Body of pancreas (tissue), 4 donors: ENCODE measurements at regions of chr12 and their contacts with region 1.

Region 1: GRCh38 chr12:13208533-13209435 is 12.3 kb downstream of the EMP1 start:
- DNase-seq: no peak
- ATAC-seq: no peak
- H3K4me3 ChIP-seq: no peak overlapping the region
- H3K27ac ChIP-seq: no peak overlapping the region
- H3K4me1 ChIP-seq: peaks cover 5% of the 10 kb centered on the region
- H3K27me3 ChIP-seq: no peaks in the 10 kb centered on the region
- CTCF ChIP-seq: peak in 4 of 7 experiments; percentile 18 to 39 (median 32)
- POLR2A ChIP-seq: no peak

Region 2: GRCh38 chr12:13023811-13024530 is 184.8 kb before region 1 on chr12:
- intact Hi-C with region 1: loop called (anchors 10 kb)
- DNase-seq: peak in 3 of 4 donors; percentile 33 to 60 (median 40)
- ATAC-seq: peak; percentile 72
- H3K4me3 ChIP-seq: no peak overlapping the region
- H3K27ac ChIP-seq: no peak overlapping the region
- H3K4me1 ChIP-seq: no peaks in the 10 kb centered on the region
- H3K27me3 ChIP-seq: no peaks in the 10 kb centered on the region
- CTCF ChIP-seq: peak in 5 of 7 experiments; percentile 30 to 55 (median 36)
- POLR2A ChIP-seq: no peak

Region 3: GRCh38 chr12:13094347-13094746 is 114.4 kb before region 1 on chr12:
- intact Hi-C with region 1: loop called (anchors 10 kb)
- DNase-seq: peak in 1 of 4 donors; percentile 29
- ATAC-seq: no peak
- H3K4me3 ChIP-seq: no peak overlapping the region
- H3K27ac ChIP-seq: peak overlapping the region in 1 of 4 donors; percentile 35
- H3K4me1 ChIP-seq: peaks cover 37% of the 10 kb centered on the region
- H3K27me3 ChIP-seq: no peaks in the 10 kb centered on the region
- CTCF ChIP-seq: no peak
- POLR2A ChIP-seq: no peak

Region 4: GRCh38 chr12:13376627-13377373 is 168.0 kb after region 1 on chr12:
- intact Hi-C with region 1: no loop called
- DNase-seq: no peak
- ATAC-seq: no peak
- H3K4me3 ChIP-seq: no peak overlapping the region
- H3K27ac ChIP-seq: no peak overlapping the region
- H3K4me1 ChIP-seq: no peaks in the 10 kb centered on the region
- H3K27me3 ChIP-seq: no peaks in the 10 kb centered on the region
- CTCF ChIP-seq: no peak
- POLR2A ChIP-seq: no peak